Activated naive CD4-positive, alpha-beta T cell treated with anti-CD3 and anti-CD28 coated beads for 36 hours (primary cell): ENCODE measurements at regions of chr1 and their contacts with region 1.

Region 1: DNA sequence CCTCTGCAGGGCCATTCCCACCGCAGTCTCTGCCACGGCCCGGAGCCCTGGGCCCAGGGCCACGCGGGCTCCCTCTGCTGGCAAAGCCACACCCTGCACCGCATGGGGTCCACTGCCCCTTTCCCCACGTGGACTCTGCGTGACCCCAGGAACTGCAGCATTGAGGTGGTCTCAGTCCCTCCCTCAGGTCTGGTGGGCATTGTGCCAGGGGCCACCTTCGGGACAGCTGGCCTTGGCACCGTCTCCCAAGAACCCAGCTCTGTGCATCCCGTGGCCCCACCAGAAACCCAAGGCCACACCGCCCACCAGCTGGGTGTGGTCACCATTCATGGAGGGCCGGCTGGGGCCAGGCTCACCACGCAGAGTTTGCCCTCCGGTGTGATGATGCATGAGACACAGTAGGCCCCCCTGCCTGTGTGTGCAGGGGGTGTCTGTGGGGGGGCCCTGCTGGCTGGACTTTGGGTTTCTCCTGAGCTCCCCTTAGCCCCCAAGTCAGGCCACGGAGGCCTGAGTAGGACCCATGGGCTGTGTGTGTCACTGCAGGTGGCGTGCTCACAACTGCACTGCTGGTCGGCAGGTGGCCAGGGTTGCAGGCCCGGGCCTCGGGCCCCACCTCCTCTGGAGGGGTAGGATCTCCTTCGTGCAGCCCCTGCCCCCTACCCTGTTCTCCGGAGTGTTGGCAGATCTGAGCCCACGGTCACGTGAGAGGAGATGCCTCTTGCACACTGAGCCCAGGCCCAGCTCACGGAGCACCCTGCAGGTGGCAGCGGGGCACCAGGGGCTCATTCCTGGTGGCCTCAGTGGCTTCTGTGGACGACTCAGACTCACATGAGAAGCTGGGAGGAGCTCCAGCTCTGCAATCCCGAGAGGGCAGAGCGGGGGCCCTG is 5.8 kb downstream of the VWA1 start:
- DNase-seq: peak; percentile 60
- H3K4me3 Mint-ChIP-seq: no peak overlapping the region
- H3K27ac Mint-ChIP-seq: no peak overlapping the region
- H3K4me1 Mint-ChIP-seq: peaks cover 5% of the 10 kb centered on the region
- H3K27me3 Mint-ChIP-seq: peaks cover 14% of the 10 kb centered on the region

Region 2: GRCh38 chr1:966611-967300 is 474.5 kb before region 1 on chr1:
- CTCF ChIA-PET with region 1: no interaction called
- intact Hi-C with region 1: no loop called
- DNase-seq: peak; percentile 87
- H3K4me3 Mint-ChIP-seq: peak overlapping the region; percentile 77
- H3K27ac Mint-ChIP-seq: peak overlapping the region; percentile 59
- H3K4me1 Mint-ChIP-seq: peaks cover 13% of the 10 kb centered on the region
- H3K27me3 Mint-ChIP-seq: peaks cover 9% of the 10 kb centered on the region

Region 3: DNA sequence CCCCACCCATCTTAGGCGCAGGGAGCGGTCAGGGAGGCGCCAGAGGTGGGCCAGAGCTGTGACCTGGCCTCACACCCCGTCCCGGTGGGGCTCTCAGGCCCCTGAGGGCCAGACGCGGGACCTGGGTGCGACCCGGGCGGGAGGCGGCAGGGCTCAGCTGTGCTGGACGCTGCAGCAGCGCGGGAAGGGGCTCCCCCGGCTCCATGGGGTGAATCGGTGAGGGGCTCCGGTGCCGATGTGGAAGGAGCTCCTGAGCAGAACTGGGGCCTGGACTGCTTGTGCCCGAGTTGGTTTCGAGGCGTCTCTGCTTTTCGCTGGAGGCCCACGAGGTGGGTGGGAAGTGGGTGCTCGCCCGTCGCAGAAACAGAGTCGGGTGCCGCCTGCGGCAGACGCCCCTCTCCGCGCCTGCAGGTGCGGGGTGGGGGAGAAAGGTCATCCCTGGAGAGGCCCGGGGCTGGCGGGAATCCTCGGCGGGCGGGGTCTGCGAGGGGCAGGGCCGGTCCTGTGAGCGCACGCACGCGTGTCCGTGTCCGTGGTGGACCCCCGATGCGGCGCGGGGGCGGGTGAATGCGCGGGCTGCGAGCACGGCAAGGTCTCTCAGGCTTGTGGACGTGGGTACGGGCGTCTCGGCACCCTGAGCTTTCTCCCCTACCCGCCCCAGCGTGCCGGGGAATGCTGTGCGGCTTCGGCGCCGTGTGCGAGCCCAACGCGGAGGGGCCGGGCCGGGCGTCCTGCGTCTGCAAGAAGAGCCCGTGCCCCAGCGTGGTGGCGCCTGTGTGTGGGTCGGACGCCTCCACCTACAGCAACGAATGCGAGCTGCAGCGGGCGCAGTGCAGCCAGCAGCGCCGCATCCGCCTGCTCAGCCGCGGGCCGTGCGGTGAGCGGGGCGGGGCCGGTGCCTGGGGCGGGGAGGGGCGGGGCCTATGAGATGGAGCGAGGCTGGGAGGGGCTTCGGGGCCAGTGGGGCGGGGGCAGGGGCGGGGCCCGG is 400.9 kb before region 1 on chr1:
- CTCF ChIA-PET with region 1: no interaction called
- intact Hi-C with region 1: no loop called
- DNase-seq: peak; percentile 84
- H3K4me3 Mint-ChIP-seq: peak overlapping the region; percentile 57
- H3K27ac Mint-ChIP-seq: no peak overlapping the region
- H3K4me1 Mint-ChIP-seq: peaks cover 19% of the 10 kb centered on the region
- H3K27me3 Mint-ChIP-seq: peaks cover 14% of the 10 kb centered on the region

Region 4: DNA sequence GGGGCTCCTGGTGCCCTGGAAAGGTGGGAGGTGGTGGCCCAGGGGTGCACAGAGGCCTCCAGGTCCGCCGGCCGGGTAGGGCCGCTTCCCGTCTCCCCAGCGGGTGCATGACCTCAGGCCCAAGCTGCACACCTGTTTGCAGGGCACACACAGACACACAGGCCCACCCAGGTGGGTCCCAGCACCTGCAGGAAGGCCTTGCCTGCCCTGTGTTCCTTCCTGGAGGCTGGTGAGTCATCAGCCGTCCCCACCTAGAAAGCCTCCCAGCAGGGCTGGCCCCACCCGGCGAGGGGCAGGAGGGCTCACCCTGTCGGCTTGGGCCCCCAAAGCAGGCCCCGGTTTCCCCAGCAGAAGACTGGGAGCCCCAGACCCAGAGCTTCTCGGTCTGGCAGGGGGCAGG is 291.1 kb before region 1 on chr1:
- CTCF ChIA-PET with region 1: no interaction called
- intact Hi-C with region 1: no loop called
- DNase-seq: no peak
- H3K4me3 Mint-ChIP-seq: no peak overlapping the region
- H3K27ac Mint-ChIP-seq: no peak overlapping the region
- H3K4me1 Mint-ChIP-seq: peaks cover 2% of the 10 kb centered on the region
- H3K27me3 Mint-ChIP-seq: no peaks in the 10 kb centered on the region

Region 5: DNA sequence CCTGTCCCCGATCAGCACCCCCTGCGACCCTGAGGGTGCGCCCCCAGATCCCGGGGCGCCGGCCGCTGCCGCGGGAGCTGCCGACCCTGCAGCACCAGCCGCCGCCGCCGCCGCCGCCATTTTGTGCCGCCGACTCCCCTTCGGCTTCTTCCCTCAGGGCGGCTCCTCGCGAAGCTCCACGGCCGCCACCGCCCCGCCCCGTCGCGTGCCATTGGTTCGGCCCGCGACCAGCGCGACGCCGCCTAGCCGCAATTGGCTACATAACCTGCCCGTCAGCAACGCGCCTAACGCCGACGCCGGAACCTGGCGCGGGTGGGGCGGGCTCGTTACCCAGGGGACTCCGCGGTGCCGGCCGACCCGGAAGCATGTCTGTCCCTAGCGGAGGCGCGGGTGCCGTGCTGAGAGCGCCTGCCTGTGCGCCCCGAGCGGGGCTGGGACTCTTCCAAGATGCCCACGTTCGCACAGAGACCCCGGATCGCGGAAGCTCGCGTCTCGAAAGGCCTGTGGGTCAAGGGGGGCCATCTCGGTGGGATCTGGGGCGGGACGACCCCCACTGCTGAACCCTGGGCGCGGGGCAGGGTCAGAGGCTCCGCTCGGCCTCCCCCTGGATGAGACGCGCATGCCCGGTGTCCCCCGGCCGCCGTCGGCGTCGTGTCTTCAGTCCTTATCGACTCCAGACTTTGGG is 41.9 kb before region 1 on chr1 and contains the start of gene CCNL2:
- CTCF ChIA-PET with region 1: interaction called, 14 read pairs
- intact Hi-C with region 1: no loop called
- DNase-seq: peak; percentile 99
- H3K4me3 Mint-ChIP-seq: peak within 1 kb of the TSS; percentile 91
- H3K27ac Mint-ChIP-seq: peak within 1 kb of the TSS; percentile 85
- H3K4me1 Mint-ChIP-seq: peaks cover 57% of the 10 kb centered on the region
- H3K27me3 Mint-ChIP-seq: no peaks in the 10 kb centered on the region
- total RNA-seq, gene CCNL2: 97.7 to 108 TPM

Region 6: DNA sequence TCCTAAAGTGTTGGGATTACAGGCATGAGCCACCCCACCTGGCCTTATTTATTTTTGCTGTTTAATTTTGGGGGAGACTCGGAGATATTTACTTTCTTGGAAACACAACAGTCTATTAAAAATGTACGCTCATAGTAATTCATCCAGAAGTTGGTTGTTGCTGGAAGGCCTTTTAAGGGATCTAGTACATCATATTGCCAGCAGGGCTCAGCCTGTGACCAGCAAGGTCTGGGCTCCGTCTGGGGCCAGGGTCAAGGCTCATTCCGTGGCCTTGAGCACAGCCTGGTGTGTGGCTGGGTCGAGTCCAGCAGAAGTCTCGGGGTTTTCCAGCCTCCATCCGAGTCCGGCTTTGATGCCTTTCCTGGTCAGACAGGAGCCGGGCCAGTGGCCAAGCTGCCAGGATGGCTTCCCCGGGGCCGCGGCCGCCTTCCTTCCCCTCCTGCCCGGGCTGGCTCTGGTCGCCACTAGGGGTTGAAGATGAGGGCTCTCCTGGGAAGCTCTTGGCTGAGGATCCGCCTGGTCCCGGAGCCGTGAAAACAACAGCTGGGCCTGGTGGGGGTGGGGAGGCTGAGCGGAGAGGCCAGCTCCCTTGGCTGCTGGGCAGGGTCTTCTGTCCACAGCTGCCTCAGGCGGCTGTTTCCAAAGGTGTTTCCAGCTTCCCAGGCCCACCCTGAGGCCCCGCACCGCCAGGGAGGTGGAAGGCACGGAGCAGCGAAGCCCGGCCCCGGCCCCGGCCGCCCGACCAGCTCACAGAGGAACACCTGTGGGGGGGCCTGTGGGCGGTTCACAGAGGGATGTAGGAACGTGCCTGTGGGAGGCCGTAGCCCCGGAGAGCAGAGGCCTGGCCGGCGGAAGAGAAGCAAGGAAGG is 10.9 kb before region 1 on chr1:
- CTCF ChIA-PET with region 1: interaction called, 11 read pairs
- intact Hi-C with region 1: no loop called
- DNase-seq: no peak
- H3K4me3 Mint-ChIP-seq: no peak overlapping the region
- H3K27ac Mint-ChIP-seq: no peak overlapping the region
- H3K4me1 Mint-ChIP-seq: peaks cover 13% of the 10 kb centered on the region
- H3K27me3 Mint-ChIP-seq: peaks cover 27% of the 10 kb centered on the region